Activated CD4-positive, alpha-beta memory T cell treated with anti-CD3 and anti-CD28 coated beads, Interleukin-2, amount 10 ng/mL, durations not matched to agents 7 days and 5 days (primary cell): ENCODE measurements at regions of chr1 and their contacts with region 1.

Region 1: GRCh38 chr1:192516776-192517297 is 58.7 kb upstream of the RGS1 start:
- DNase-seq: peak; percentile 68
- H3K4me3 Mint-ChIP-seq: peak overlapping the region; percentile 65
- H3K27ac Mint-ChIP-seq: peak overlapping the region; percentile 80
- H3K4me1 Mint-ChIP-seq: peaks cover 49% of the 10 kb centered on the region
- H3K27me3 Mint-ChIP-seq: no peaks in the 10 kb centered on the region

Region 2: GRCh38 chr1:192539297-192540092 is 22.7 kb after region 1 on chr1:
- CTCF ChIA-PET with region 1: interaction called, 3 read pairs
- POLR2A ChIA-PET with region 1: interaction called, 14 read pairs
- DNase-seq: no peak
- H3K4me3 Mint-ChIP-seq: peak overlapping the region; percentile 17
- H3K27ac Mint-ChIP-seq: peak overlapping the region; percentile 83
- H3K4me1 Mint-ChIP-seq: peaks cover 73% of the 10 kb centered on the region
- H3K27me3 Mint-ChIP-seq: no peaks in the 10 kb centered on the region

Region 3: DNA sequence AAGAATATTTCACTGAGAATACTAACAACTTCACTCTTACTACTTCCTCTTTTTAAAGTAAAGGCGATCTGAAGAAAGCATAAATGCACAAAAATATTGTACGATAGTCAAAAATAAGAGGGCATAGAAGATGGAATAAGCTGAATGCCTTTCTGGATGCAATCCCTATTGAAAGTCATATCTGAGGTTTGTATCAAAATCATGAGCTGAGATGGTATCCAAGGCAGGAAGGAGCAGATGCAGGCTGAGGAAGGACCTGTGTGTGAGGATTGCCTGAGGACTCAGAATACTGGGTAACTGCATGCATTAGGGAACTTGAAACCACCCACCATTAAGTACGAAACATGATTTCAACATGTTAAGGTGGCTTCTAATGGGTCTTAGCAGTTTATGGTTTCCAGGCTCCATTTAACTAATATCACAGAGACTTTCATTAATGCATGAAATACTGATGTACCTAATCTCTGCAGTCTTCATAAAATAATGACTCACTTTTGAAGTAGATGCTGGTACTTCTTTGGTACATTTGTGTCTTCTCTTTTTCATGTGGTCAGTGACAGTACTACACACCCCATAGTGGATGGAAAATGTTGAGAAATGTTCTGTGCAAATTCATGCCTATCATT is 29.2 kb after region 1 on chr1:
- CTCF ChIA-PET with region 1: interaction called, 7 read pairs
- POLR2A ChIA-PET with region 1: interaction called, 18 read pairs
- DNase-seq: no peak
- H3K4me3 Mint-ChIP-seq: no peak overlapping the region
- H3K27ac Mint-ChIP-seq: peak overlapping the region; percentile 24
- H3K4me1 Mint-ChIP-seq: peaks cover 68% of the 10 kb centered on the region
- H3K27me3 Mint-ChIP-seq: no peaks in the 10 kb centered on the region

Region 4: DNA sequence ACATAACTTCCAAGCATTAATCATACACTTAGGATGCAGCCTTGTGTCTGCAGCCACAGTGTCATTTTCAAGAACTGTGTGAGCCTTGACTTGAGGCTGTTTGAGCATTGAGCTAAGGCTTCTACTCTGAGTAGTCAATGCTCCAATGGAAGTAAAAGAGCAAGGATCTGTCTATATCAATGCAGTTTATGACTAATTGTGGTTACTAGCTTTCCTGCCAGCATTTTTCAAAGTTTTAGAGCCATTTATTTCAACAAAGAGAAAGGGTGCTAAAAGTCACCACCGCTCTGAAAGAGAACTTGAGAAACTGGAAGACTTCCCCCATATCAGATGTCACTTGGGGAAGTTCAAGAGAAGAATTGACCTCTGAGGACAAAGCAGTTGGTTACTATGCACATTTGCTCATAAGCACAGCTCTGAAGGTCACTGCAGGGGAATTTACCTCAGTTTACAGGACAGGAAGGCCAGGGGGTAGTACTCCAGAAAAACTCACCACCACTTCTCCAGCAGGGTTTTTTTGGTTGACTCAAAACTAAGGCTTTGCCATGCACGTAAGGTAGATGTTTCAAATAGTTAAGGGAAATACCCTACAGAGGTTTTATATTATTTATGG is 34.2 kb after region 1 on chr1:
- CTCF ChIA-PET with region 1: interaction called, 7 read pairs
- POLR2A ChIA-PET with region 1: interaction called, 18 read pairs
- DNase-seq: no peak
- H3K4me3 Mint-ChIP-seq: peak overlapping the region; percentile 6
- H3K27ac Mint-ChIP-seq: peak overlapping the region; percentile 85
- H3K4me1 Mint-ChIP-seq: peaks cover 63% of the 10 kb centered on the region
- H3K27me3 Mint-ChIP-seq: no peaks in the 10 kb centered on the region

Region 5: DNA sequence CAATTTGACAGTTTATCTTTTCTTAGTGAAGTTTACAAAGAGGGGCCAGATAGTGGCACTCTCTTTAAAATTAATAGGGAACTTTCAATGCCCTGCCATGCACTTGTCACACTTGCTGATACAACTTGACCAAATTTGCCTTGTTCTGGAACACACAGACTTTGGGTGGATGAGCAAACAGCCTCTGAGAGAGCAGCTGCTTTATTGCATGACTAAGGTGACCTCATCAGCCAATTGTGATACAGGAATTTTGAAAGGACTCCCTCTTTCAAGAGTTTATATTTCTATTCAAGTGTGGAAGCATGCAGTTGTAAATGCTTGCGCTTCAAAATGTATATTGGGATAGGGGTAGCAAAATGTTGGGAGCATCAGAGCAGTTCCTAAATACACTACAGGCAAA is 56.7 kb after region 1 on chr1:
- CTCF ChIA-PET with region 1: interaction called, 3 read pairs
- POLR2A ChIA-PET with region 1: interaction called, 12 read pairs
- DNase-seq: no peak
- H3K4me3 Mint-ChIP-seq: no peak overlapping the region
- H3K27ac Mint-ChIP-seq: peak overlapping the region; percentile 42
- H3K4me1 Mint-ChIP-seq: peaks cover 79% of the 10 kb centered on the region
- H3K27me3 Mint-ChIP-seq: no peaks in the 10 kb centered on the region

Region 6: GRCh38 chr1:192580351-192580962 is 63.6 kb after region 1 on chr1:
- CTCF ChIA-PET with region 1: interaction called, 9 read pairs
- POLR2A ChIA-PET with region 1: interaction called, 12 read pairs
- DNase-seq: no peak
- H3K4me3 Mint-ChIP-seq: peak overlapping the region; percentile 15
- H3K27ac Mint-ChIP-seq: no peak overlapping the region
- H3K4me1 Mint-ChIP-seq: peaks cover 39% of the 10 kb centered on the region
- H3K27me3 Mint-ChIP-seq: no peaks in the 10 kb centered on the region

Region 7: DNA sequence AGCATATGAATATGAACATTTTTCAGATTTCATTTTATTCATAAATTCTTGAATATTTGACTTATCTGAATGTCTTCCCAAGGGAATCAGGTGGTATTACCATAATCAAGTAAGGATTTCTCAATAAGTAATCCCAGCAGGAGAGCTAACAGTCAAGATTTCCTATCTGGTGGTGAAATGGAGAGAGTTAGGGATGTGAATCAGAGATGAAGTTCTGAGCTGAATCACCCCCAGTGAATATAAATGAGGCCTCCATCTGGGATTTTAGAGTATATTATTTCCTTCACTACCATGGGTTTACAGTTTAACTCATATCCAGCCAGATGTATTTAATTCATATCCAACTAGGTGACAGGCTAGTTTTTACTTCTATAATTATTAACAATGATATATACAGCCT is 230.5 kb after region 1 on chr1:
- CTCF ChIA-PET with region 1: no interaction called
- POLR2A ChIA-PET with region 1: no interaction called
- DNase-seq: no peak
- H3K4me3 Mint-ChIP-seq: no peak overlapping the region
- H3K27ac Mint-ChIP-seq: no peak overlapping the region
- H3K4me1 Mint-ChIP-seq: no peaks in the 10 kb centered on the region
- H3K27me3 Mint-ChIP-seq: no peaks in the 10 kb centered on the region